GM12878 (cell line): ENCODE measurements at regions of chr1 and their contacts with region 1.

Region 1: GRCh38 chr1:12078938-12079861 is 16.1 kb downstream of the TNFRSF8 start:
- DNase-seq: peak; percentile 82
- ATAC-seq: peak; percentile 83
- H3K4me3 ChIP-seq: peak overlapping the region; percentile 52
- H3K27ac ChIP-seq: peak overlapping the region; percentile 97
- H3K4me1 ChIP-seq: peaks cover 67% of the 10 kb centered on the region
- H3K27me3 ChIP-seq: no peaks in the 10 kb centered on the region
- CTCF ChIP-seq: peak; percentile 68 to 74 (median 71)
- EP300 ChIP-seq: peak in 1 of 2 experiments; percentile 11; a peak in 3 of 4 replicates
- POLR2A ChIP-seq: peak; percentile 71
- RAD21 ChIP-seq: peak; percentile 72

Region 2: DNA sequence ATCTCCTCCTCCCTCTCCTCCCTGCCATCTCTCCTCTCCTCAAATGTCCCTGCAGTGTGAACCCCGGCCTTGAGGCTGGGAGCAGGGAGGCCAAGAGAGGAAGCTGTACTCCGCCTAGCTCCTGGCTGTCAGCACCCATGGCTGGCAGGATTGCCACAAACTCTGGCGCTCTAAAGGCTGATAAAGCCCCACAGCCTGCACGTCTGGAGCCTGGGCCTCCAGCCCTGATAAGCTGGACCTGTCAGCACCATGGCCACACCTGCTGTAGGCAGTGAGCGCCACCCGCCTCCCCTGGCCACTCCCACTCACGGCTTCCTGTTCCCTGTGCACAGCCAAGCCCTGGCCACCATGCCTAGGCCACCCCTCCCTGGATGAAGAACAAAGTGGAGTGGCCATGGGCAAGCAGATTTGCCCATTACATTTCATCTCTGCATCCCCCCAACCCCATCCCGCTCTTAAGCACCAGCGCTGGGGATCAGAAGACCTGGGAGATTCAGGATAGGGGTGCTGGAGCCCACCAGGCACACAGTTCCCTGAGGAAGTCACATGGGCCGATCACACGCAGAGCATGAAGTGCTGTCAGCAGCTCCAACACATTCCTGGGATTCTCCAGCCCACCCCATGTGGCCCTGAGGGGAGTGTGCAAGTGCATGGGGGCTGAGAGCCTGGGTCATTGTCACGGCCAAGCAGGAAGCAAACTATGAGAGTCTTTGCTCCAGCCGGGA is 196.2 kb before region 1 on chr1:
- CTCF ChIA-PET with region 1: no interaction called
- POLR2A ChIA-PET with region 1: no interaction called
- RAD21 ChIA-PET with region 1: no interaction called
- SMC1A ChIA-PET with region 1: no interaction called
- in situ Hi-C with region 1: no loop called
- intact Hi-C with region 1: no loop called
- DNase-seq: no peak
- ATAC-seq: peak; percentile 71
- H3K4me3 ChIP-seq: no peak overlapping the region
- H3K27ac ChIP-seq: no peak overlapping the region
- H3K4me1 ChIP-seq: no peaks in the 10 kb centered on the region
- H3K27me3 ChIP-seq: no peaks in the 10 kb centered on the region; a peak in 1 of 4 replicates
- CTCF ChIP-seq: no peak
- EP300 ChIP-seq: no peak
- POLR2A ChIP-seq: no peak
- RAD21 ChIP-seq: no peak

Region 3: GRCh38 chr1:11979851-11980675 is 99.1 kb before region 1 on chr1 and contains the start of gene MFN2:
- CTCF ChIA-PET with region 1: interaction called, 19 read pairs
- POLR2A ChIA-PET with region 1: no interaction called
- RAD21 ChIA-PET with region 1: interaction called, 8 read pairs
- SMC1A ChIA-PET with region 1: interaction called, 7 read pairs
- in situ Hi-C with region 1: no loop called
- intact Hi-C with region 1: no loop called
- DNase-seq: peak; percentile 83
- ATAC-seq: peak; percentile 96
- H3K4me3 ChIP-seq: peak within 1 kb of the TSS; percentile 99
- H3K27ac ChIP-seq: peak within 1 kb of the TSS; percentile 83
- H3K4me1 ChIP-seq: peaks cover 6% of the 10 kb centered on the region
- H3K27me3 ChIP-seq: no peaks in the 10 kb centered on the region
- CTCF ChIP-seq: no peak
- EP300 ChIP-seq: no peak
- POLR2A ChIP-seq: peak; percentile 92
- RAD21 ChIP-seq: no peak
- polyA plus RNA-seq, gene MFN2: 5.3 to 6.4 TPM

Region 4: DNA sequence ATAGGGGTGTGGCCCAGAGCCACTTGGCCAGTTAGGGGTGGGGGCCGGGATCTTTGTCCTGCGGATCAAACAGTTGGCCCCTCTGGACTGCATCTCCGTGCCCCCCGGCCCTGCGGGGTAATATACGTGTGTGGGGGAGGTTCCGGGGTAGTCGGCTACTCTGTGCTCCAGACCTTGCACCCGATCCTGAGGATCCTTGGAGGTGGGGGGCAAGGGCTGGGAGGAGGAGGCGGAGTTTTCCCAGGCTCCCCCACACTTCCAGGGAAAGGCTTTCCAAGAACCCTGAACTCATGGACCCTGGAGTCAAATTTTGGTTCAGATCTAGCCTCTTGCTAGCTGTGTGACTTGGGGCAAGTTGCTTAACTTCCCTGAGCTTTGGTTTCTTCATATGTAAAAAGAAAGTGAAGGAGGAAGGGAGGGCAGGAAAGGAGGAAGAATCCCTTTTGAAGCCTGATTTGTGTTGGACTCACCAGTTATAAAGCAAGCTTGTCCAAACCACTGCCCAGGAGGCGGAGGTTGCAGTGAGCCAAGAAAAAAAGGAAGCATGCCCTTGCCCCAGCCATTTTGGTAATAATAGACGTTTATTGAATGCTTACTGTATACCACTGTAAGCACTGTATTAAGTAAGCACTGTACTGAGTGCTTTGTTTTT is 59.2 kb before region 1 on chr1:
- CTCF ChIA-PET with region 1: interaction called, 46 read pairs
- POLR2A ChIA-PET with region 1: interaction called, 9 read pairs
- RAD21 ChIA-PET with region 1: interaction called, 50 read pairs
- SMC1A ChIA-PET with region 1: interaction called, 28 read pairs
- in situ Hi-C with region 1: no loop called
- intact Hi-C with region 1: loop called (anchors 1 kb)
- DNase-seq: no peak
- ATAC-seq: peak; percentile 17
- H3K4me3 ChIP-seq: peak overlapping the region; percentile 88
- H3K27ac ChIP-seq: peak overlapping the region; percentile 86
- H3K4me1 ChIP-seq: peaks cover 4% of the 10 kb centered on the region; the same call in 1 of the 2 replicates
- H3K27me3 ChIP-seq: no peaks in the 10 kb centered on the region
- CTCF ChIP-seq: no peak
- EP300 ChIP-seq: no peak
- POLR2A ChIP-seq: no peak
- RAD21 ChIP-seq: no peak

Region 5: GRCh38 chr1:12040457-12041051 is 38.6 kb before region 1 on chr1:
- CTCF ChIA-PET with region 1: interaction called, 53 read pairs
- POLR2A ChIA-PET with region 1: interaction called, 52 read pairs
- RAD21 ChIA-PET with region 1: interaction called, 70 read pairs
- SMC1A ChIA-PET with region 1: interaction called, 50 read pairs
- in situ Hi-C with region 1: no loop called
- intact Hi-C with region 1: loop called (anchors 1 kb)
- DNase-seq: peak; percentile 79
- ATAC-seq: peak; percentile 80
- H3K4me3 ChIP-seq: peak overlapping the region; percentile 21; the same call in 1 of the 2 replicates
- H3K27ac ChIP-seq: peak overlapping the region; percentile 68
- H3K4me1 ChIP-seq: peaks cover 53% of the 10 kb centered on the region
- H3K27me3 ChIP-seq: no peaks in the 10 kb centered on the region
- CTCF ChIP-seq: no peak
- EP300 ChIP-seq: peak; percentile 51 to 60; a peak in 3 of 4 replicates
- POLR2A ChIP-seq: peak; percentile 46; the same call in 1 of the 2 replicates
- RAD21 ChIP-seq: peak; percentile 9; the same call in 1 of the 2 replicates

Region 6: DNA sequence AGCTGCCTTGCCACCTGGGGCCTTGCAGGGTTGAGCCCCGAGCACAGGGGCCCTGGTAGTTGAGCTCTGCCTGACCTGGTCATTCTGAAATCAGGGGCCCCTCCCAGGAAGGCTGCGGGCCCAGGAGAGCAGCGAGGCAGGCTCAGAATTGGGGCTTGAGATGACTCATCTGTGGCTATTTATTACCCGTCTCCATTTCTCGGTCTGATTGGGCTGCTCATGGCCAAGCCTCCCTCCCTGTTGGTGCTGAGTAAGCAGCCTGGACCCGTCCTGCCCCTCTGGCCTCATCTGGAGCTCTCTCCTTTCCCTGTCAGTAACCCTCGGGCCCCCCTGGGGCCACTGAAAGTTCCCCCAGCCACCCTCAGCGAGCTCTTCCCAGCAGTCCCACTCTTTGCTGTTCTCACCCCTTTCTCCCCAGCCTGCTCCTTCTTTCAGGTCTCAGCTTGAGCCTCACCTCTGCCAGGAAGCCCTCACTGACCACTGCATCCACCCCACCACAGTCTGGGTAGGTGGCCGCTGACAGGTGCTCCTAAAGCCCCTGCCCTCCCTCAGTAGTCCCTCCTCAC is 27.1 kb before region 1 on chr1:
- CTCF ChIA-PET with region 1: interaction called, 37 read pairs
- POLR2A ChIA-PET with region 1: interaction called, 134 read pairs
- RAD21 ChIA-PET with region 1: interaction called, 53 read pairs
- SMC1A ChIA-PET with region 1: interaction called, 38 read pairs
- in situ Hi-C with region 1: no loop called
- intact Hi-C with region 1: loop called (anchors 2 kb)
- DNase-seq: peak; percentile 96
- ATAC-seq: peak; percentile 79
- H3K4me3 ChIP-seq: peak overlapping the region; percentile 45; the same call in 1 of the 2 replicates
- H3K27ac ChIP-seq: peak overlapping the region; percentile 100
- H3K4me1 ChIP-seq: peaks cover 93% of the 10 kb centered on the region
- H3K27me3 ChIP-seq: no peaks in the 10 kb centered on the region
- CTCF ChIP-seq: no peak
- EP300 ChIP-seq: peak; percentile 79 to 95
- POLR2A ChIP-seq: peak; percentile 56; the same call in 1 of the 2 replicates
- RAD21 ChIP-seq: peak; percentile 19

Region 7: DNA sequence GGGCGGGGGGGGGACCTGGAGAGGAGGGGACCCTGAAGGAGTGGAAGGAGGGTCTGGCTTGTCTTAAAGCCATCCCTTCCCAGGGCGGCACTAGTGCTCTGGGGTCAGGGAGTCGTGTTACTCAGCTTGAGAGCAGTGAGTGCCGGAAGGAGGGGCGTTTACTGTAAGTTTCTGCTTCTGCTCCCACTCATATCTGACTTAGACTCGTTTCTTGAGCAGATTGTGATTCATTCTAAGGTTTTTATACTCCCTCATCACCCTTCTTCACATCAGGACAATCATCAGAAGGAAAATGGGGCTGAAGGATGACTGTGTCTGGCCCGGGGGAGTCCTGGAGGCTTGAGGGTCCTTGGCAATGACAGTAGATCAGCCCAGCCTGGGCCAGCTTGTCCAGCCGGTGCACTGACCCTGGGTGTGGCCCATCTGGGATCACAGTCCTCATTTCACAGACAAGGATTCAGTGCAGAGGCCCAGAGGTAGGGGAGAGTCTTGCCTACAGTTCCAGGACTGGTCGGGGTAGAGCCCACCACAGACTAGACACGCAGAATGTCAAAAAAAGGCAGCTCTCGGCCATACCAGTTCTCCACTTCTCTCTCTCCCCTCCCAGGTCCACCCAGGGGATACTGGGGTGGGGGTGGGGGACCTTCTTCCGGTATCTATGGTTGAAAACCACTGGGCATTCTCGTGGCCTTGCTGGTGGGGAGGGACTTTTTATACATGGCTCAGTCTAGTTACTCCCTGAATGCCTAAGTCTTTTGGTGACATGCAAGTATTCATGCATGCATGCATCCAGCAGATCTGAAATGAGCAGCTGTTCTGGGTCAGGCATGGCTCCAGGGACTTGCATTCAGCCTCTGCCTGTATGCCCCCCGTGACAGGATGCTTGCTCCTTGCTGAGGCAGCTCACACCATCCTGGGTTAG is 11.0 kb before region 1 on chr1:
- CTCF ChIA-PET with region 1: interaction called, 80 read pairs
- POLR2A ChIA-PET with region 1: interaction called, 106 read pairs
- RAD21 ChIA-PET with region 1: interaction called, 120 read pairs
- SMC1A ChIA-PET with region 1: interaction called, 106 read pairs
- in situ Hi-C with region 1: no loop called
- intact Hi-C with region 1: loop called (anchors 1 kb)
- DNase-seq: peak; percentile 91
- ATAC-seq: peak; percentile 56
- H3K4me3 ChIP-seq: peak overlapping the region; percentile 86
- H3K27ac ChIP-seq: peak overlapping the region; percentile 91
- H3K4me1 ChIP-seq: peaks cover 39% of the 10 kb centered on the region
- H3K27me3 ChIP-seq: no peaks in the 10 kb centered on the region
- CTCF ChIP-seq: no peak
- EP300 ChIP-seq: peak; percentile 45 to 83; a peak in 3 of 4 replicates
- POLR2A ChIP-seq: peak; percentile 67
- RAD21 ChIP-seq: no peak